SK-N-SH (cell line): ENCODE measurements at regions of chr10 and their contacts with region 1.

Region 1: DNA sequence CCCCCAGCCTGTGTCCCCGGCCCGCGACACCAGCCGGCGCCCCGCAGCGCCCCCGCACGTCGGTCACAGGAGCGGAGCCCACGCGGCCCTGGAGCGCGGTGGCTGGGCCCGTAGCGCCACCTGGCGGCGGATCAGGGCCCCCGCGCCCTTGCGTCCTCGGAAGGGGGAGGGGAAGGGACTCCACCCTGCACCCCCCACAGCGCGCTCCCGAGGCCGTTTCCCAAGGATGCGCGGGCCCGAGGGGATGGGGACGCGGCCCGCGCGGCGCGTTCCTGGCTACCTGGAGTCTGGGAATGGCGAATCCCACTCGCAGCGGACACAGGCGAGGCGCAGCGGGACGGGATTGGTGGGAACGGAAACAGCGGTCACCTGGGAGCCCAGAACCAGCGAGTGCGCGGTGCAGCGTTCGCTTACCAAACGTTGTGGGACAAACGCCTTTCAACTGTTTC is 23.8 kb upstream of the MKI67 start:
- DNase-seq: peak; percentile 99
- H3K4me3 ChIP-seq: peak overlapping the region; percentile 58 to 81
- H3K27ac ChIP-seq: peak overlapping the region in 1 of 2 experiments; percentile 39; a peak in 1 of 4 replicates
- H3K4me1 ChIP-seq: peaks cover 6 to 14% of the 10 kb centered on the region in 2 experiments; a peak in 2 of 4 replicates
- H3K27me3 ChIP-seq: no peaks in the 10 kb centered on the region
- CTCF ChIP-seq: peak; percentile 77
- EP300 ChIP-seq: no peak
- RAD21 ChIP-seq: peak; percentile 83

Region 2: DNA sequence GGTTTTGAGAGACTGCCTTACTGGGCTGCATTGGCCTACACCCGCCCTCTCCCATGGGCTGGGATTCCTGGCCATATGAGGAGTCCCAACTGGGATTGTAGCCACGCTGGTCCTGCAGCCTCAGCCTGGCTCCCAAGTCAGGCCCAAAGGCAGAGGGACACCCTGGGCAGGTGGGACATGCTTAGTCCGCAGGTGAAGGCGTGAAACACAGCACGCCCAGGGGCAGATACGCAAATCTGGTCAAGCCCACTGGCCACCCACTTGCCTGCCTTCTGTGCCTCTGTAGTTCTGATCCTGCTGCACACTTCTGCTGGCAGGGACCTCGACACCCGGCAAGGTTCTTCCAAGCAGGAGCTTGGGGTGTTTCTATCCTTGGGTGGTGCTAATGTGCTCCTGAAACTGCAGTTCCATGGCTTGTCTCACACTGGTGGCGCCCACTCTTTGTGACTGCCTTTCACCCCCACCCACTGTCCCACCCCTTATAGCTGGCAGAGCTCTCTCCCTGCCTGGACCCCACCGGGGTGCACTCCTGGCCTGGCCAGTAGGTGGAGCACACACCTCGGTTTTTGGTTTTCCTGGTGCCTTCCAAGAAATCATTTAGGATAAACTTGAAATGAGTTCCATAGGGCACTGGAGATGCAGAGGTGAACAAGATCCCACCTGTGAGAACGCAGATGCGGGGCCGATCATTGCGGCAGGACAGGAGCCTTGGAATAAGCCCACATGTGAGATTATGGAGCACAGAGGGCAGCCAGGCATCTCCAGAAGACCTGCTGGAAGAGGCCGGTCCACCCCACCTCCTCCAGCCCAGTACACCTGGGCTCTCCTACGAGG is 71.7 kb before region 1 on chr10:
- CTCF ChIA-PET with region 1: interaction called, 143 read pairs
- POLR2A ChIA-PET with region 1: no interaction called
- DNase-seq: peak; percentile 86
- H3K4me3 ChIP-seq: no peak overlapping the region; a peak in 1 of 4 replicates
- H3K27ac ChIP-seq: no peak overlapping the region
- H3K4me1 ChIP-seq: no peaks in the 10 kb centered on the region; a peak in 1 of 4 replicates
- H3K27me3 ChIP-seq: no peaks in the 10 kb centered on the region
- CTCF ChIP-seq: peak; percentile 80
- EP300 ChIP-seq: no peak
- RAD21 ChIP-seq: peak; percentile 86

Region 3: GRCh38 chr10:128137877-128138276 is 12.2 kb before region 1 on chr10:
- CTCF ChIA-PET with region 1: interaction called, 15 read pairs
- POLR2A ChIA-PET with region 1: no interaction called
- DNase-seq: no peak
- H3K4me3 ChIP-seq: no peak overlapping the region
- H3K27ac ChIP-seq: no peak overlapping the region
- H3K4me1 ChIP-seq: no peaks in the 10 kb centered on the region; a peak in 1 of 4 replicates
- H3K27me3 ChIP-seq: no peaks in the 10 kb centered on the region; the same call in none of the 2 replicates
- CTCF ChIP-seq: no peak
- EP300 ChIP-seq: no peak
- RAD21 ChIP-seq: no peak

Region 4: GRCh38 chr10:128186959-128187787 is 37.1 kb after region 1 on chr10:
- CTCF ChIA-PET with region 1: interaction called, 28 read pairs
- POLR2A ChIA-PET with region 1: interaction called, 4 read pairs
- DNase-seq: peak; percentile 78
- H3K4me3 ChIP-seq: peak overlapping the region in 1 of 2 experiments; percentile 22; a peak in 1 of 4 replicates
- H3K27ac ChIP-seq: peak overlapping the region in 1 of 2 experiments; percentile 98; a peak in 2 of 4 replicates
- H3K4me1 ChIP-seq: peaks cover 0 to 24% of the 10 kb centered on the region in 2 experiments; a peak in 2 of 4 replicates
- H3K27me3 ChIP-seq: no peaks in the 10 kb centered on the region
- CTCF ChIP-seq: no peak
- EP300 ChIP-seq: peak in 1 of 2 experiments; percentile 99; a peak in 2 of 4 replicates
- RAD21 ChIP-seq: 0 out of 2 replicates have a peak, but pooled peaks have one; percentile 14

Region 5: GRCh38 chr10:128220011-128220410 is 69.9 kb after region 1 on chr10:
- CTCF ChIA-PET with region 1: no interaction called
- POLR2A ChIA-PET with region 1: no interaction called
- DNase-seq: no peak
- H3K4me3 ChIP-seq: no peak overlapping the region
- H3K27ac ChIP-seq: no peak overlapping the region
- H3K4me1 ChIP-seq: no peaks in the 10 kb centered on the region
- H3K27me3 ChIP-seq: no peaks in the 10 kb centered on the region
- CTCF ChIP-seq: no peak
- EP300 ChIP-seq: no peak
- RAD21 ChIP-seq: no peak

Region 6: GRCh38 chr10:128549101-128549608 is 399.1 kb after region 1 on chr10:
- CTCF ChIA-PET with region 1: no interaction called
- POLR2A ChIA-PET with region 1: no interaction called
- DNase-seq: no peak
- H3K4me3 ChIP-seq: no peak overlapping the region
- H3K27ac ChIP-seq: no peak overlapping the region
- H3K4me1 ChIP-seq: no peaks in the 10 kb centered on the region
- H3K27me3 ChIP-seq: no peaks in the 10 kb centered on the region
- CTCF ChIP-seq: no peak
- EP300 ChIP-seq: no peak
- RAD21 ChIP-seq: no peak